ENCODE measurements at regions of chrX and their contacts with region 1.

Region 1: DNA sequence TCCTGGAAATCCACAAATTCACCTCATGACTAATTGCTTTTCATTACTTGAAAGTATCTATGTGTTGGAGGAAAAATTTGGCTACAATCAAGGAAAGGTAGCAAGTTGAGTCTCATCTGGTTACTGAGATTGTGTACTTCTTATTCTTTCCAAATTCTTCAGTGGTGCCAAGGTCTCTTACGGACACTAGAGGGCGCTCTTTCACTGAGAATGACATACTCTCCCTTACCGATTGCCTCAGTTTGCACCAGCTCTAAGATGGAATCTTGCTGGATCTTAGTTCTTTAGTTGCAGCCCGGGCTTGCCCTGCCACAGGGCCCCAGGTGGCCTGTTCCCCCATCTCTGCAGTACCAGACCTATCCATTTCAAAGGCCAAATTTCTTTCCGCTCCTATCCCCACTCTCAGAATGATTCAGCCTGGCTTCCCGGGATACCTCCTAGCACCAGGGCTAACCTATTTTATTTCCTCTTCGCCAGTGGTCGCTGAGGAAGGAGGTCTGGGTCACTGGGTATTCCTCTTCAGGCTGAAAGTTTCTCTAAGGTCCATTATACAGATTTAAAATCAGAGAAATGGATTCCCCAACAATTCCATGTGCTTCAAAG is 24.6 kb upstream of the GPR50 start:
- DNase-seq: peak; percentile 45 to 64
- H3K4me3 ChIP-seq: no peak overlapping the region
- H3K4me1 ChIP-seq: no peaks in the 10 kb centered on the region
- H3K27me3 ChIP-seq: peaks cover 20% of the 10 kb centered on the region

Region 2: GRCh38 chrX:151359931-151360871 is 208.4 kb after region 1 on chrX:
- in situ Hi-C with region 1: loop called (anchors 25 kb)
- DNase-seq: peak in 1 of 2 experiments; percentile 75
- H3K4me3 ChIP-seq: no peak overlapping the region
- H3K4me1 ChIP-seq: no peaks in the 10 kb centered on the region
- H3K27me3 ChIP-seq: peaks cover 7% of the 10 kb centered on the region; the same call in 1 of the 2 replicates

Region 3: DNA sequence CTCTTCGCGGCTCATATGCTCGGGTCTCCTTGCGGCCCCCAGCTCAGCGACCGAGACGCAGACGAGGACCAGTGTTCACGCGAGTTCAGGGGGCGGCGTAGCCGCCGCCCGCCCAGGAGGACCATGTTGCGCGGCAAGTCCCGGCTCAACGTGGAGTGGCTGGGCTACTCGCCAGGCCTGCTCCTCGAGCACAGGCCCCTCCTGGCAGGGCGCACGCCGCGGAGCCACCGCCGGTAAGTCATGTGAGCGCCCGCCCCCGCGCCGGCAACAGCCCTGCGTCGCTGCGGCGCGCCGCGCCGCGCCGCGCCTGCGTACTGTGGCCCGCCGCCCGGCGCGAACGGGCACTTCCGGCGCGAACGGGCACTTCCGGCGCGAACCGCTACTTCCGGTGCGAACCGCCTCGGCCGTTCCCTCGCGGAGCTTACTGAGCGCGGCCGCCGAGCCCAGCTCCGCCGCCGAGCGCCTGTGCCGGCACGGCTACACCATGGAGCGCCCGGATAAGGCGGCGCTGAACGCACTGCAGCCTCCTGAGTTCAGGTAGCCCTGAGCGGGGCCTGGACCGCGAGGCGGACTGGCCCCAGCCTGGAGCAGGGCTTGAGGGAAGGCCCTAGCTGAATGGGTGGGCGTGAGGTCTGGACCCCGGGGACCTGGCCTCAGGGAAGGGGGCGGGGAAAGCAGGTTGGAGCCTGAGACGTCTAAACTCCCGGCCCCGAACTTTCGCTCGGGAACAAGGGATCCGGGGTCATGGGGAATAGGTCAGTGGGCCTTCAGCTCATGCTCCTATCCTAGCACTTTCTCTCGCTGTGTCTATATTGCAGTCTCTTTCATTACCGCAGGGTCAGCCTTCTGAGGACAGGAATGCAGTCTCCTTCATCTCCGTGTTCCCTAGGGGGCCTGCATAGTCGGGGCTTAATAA is 245.3 kb after region 1 on chrX and contains the start of gene VMA21:
- in situ Hi-C with region 1: no loop called
- DNase-seq: peak; percentile 65 to 89
- H3K4me3 ChIP-seq: peak within 1 kb of the TSS; percentile 95
- H3K4me1 ChIP-seq: peaks cover 32% of the 10 kb centered on the region
- H3K27me3 ChIP-seq: no peaks in the 10 kb centered on the region

Region 4: GRCh38 chrX:151488677-151489076 is 336.9 kb after region 1 on chrX:
- in situ Hi-C with region 1: loop called (anchors 25 kb)
- DNase-seq: peak in 1 of 2 experiments; percentile 28
- H3K4me3 ChIP-seq: no peak overlapping the region
- H3K4me1 ChIP-seq: no peaks in the 10 kb centered on the region
- H3K27me3 ChIP-seq: no peaks in the 10 kb centered on the region

Region 5: GRCh38 chrX:151680805-151681204 is 529.0 kb after region 1 on chrX:
- in situ Hi-C with region 1: loop called (anchors 5 kb)
- DNase-seq: peak; percentile 17 to 87
- H3K4me3 ChIP-seq: no peak overlapping the region
- H3K4me1 ChIP-seq: no peaks in the 10 kb centered on the region
- H3K27me3 ChIP-seq: no peaks in the 10 kb centered on the region